Psoas muscle (tissue), 8 donors: ENCODE measurements at regions of chr13 and their contacts with region 1.

Region 1: DNA sequence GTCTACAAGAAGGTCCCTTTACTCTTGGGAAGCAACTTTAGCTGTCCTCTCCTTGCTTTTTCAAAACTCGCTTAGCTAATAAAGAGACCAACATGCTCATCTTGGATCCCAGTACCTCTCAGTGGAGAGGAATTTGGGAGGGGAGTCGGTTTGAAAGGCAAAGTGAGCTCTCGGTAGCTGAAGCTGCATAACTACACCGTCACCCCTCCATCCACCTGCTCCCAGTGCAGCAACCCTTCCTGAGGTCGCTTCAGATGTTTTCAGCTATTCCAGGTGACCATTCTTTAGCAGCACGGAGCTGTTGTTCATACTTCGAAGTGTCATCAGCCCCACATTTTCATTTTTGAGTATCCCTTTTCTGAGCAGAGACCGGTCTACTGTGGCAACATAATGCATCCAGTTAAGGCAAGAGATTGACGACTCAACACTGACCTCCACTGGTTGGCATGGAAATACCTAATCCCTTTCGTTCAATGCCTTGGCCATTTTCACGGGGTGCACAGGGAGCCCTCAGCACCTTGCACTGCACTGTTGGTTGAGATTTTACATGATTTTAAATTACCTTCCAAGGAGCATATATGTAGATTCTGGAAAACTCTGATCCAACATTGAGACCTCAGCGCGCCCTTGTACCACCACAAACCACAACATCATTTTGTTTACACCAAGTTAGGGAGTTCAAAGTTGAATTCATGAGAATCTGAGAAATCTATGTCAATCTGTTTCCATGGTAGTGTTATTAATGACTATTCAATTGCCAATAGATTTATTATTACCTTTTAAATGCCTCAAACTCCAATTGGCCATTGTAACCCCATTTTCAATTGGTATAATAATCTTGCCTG is 42.2 kb downstream of the DLEU7 start:
- DNase-seq: no peak
- ATAC-seq: peak; percentile 83 to 96 (median 90)
- H3K4me3 ChIP-seq: peak overlapping the region; percentile 30
- H3K27ac ChIP-seq: no peak overlapping the region
- H3K4me1 ChIP-seq: peaks cover 14% of the 10 kb centered on the region
- H3K27me3 ChIP-seq: no peaks in the 10 kb centered on the region
- CTCF ChIP-seq: peak; percentile 73

Region 2: GRCh38 chr13:49976314-49977258 is 824.7 kb before region 1 on chr13:
- intact Hi-C with region 1: loop called in 1 of 2 experiments (anchors 5 kb)
- DNase-seq: peak; percentile 64 to 80
- ATAC-seq: peak; percentile 73 to 92 (median 86)
- H3K4me3 ChIP-seq: no peak overlapping the region
- H3K27ac ChIP-seq: no peak overlapping the region
- H3K4me1 ChIP-seq: no peaks in the 10 kb centered on the region
- H3K27me3 ChIP-seq: no peaks in the 10 kb centered on the region
- CTCF ChIP-seq: peak; percentile 90

Region 3: GRCh38 chr13:50370303-50370950 is 430.9 kb before region 1 on chr13:
- intact Hi-C with region 1: loop called in 1 of 2 experiments (anchors 10 kb)
- DNase-seq: no peak
- ATAC-seq: no peak
- H3K4me3 ChIP-seq: no peak overlapping the region
- H3K27ac ChIP-seq: no peak overlapping the region
- H3K4me1 ChIP-seq: no peaks in the 10 kb centered on the region
- H3K27me3 ChIP-seq: no peaks in the 10 kb centered on the region
- CTCF ChIP-seq: no peak

Region 4: GRCh38 chr13:50552424-50552966 is 248.8 kb before region 1 on chr13:
- intact Hi-C with region 1: loop called in 1 of 2 experiments (anchors 10 kb)
- DNase-seq: no peak
- ATAC-seq: no peak
- H3K4me3 ChIP-seq: no peak overlapping the region
- H3K27ac ChIP-seq: no peak overlapping the region
- H3K4me1 ChIP-seq: peaks cover 4% of the 10 kb centered on the region
- H3K27me3 ChIP-seq: no peaks in the 10 kb centered on the region
- CTCF ChIP-seq: no peak

Region 5: DNA sequence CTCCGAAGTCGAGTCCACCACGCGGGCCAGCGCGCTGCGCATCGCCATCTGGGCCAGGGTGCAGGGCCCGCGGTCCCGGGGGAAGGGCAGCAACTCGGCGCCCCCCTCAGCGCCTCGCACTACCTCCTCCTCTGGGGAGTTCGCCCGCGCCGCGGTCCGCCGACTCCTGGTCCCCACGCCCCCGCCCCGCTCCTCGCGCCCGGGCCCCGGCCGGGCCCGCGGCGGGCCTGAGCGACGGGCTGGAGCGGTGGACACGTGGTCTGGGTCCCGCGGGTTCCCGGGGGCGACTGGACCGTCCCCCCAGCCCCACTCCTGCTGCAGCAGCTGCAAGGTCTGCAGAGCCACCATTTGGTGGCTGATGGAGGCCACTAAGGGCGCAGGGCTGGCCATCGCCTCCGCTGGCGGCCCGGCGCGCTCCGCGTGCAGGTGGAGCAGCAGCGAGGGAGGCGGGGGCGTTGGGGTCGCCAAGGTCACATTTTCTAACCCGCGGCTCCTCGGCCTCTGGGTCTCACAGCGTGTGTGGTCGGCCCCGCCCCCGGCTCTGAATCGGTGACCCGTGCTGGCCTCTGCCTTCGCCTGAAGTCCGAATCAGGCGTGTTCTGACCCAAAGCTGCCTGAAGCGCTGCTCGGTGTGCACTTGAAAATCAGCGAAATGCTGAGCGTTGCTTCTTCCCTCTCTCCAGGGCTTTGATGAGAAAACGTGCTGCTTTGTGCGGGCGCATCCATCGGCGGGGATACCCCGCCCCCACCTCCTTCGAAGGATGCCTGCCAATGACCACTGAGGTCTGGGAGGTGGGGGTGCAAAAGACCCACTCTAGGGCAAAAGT is 42.2 kb after region 1 on chr13 and contains the start of gene DLEU7:
- intact Hi-C with region 1: no loop called
- DNase-seq: peak in 1 of 2 donors; percentile 49
- ATAC-seq: peak in 1 of 4 donors; percentile 7
- H3K4me3 ChIP-seq: peak within 1 kb of the TSS; percentile 55
- H3K27ac ChIP-seq: no peak within 1 kb of the TSS
- H3K4me1 ChIP-seq: peaks cover 5% of the 10 kb centered on the region
- H3K27me3 ChIP-seq: peaks cover 0 to 35% (median 0%) of the 10 kb centered on the region in 3 donors
- CTCF ChIP-seq: no peak
- total RNA-seq, gene DLEU7: 0.15 TPM in 1 of 4 donors, not detected in the others

Region 6: GRCh38 chr13:51134763-51135365 is 333.6 kb after region 1 on chr13:
- intact Hi-C with region 1: no loop called
- DNase-seq: no peak
- ATAC-seq: no peak
- H3K4me3 ChIP-seq: no peak overlapping the region
- H3K27ac ChIP-seq: no peak overlapping the region
- H3K4me1 ChIP-seq: no peaks in the 10 kb centered on the region
- H3K27me3 ChIP-seq: no peaks in the 10 kb centered on the region
- CTCF ChIP-seq: no peak